ENCODE measurements at regions of chr12 and their contacts with region 1.

Region 1: DNA sequence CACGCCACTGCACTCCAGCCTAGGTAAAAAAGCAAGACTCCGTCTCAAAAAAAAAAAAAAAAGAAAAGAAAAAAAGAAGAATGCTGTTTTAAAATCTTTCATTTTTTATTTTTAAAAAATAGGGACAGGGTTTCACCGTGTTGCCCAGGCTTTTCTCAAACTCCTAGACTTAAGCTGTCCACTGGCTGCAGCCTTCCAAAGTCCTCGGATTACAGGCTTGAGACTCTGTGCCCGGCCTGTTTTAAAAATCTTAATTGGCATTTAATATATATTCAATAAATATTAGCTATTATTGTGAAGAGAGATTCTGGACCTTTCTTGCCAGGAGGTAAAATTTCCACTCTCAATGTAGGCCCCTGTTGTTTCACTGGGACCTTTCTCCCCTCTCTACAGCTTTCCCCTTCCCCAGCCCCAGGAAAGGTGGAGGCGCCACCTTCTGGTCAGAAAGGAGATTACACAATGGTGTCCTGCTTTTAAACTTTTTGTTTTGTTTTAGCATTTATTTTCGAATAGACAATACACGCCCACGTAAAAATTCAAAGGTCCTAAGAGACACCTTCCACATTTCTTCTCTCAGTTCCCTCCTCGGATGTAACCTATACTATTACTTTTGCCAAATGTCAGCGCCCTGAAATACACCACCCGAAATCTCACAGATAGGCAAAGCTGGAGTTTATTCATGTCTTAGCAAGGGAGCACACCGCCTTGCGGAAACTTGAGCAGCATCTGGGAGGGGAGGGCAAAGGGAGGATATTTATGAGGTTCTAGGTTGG is 23.8 kb upstream of the PHC1 start:
- DNase-seq: peak; percentile 67
- ATAC-seq: peak; percentile 55
- H3K4me3 Mint-ChIP-seq: peak overlapping the region; percentile 73
- H3K27ac Mint-ChIP-seq: no peak overlapping the region
- H3K4me1 Mint-ChIP-seq: peaks cover 5% of the 10 kb centered on the region
- H3K27me3 Mint-ChIP-seq: peaks cover 19% of the 10 kb centered on the region

Region 2: GRCh38 chr12:8590842-8591550 is 299.5 kb before region 1 on chr12:
- CTCF ChIA-PET with region 1: no interaction called
- DNase-seq: no peak
- ATAC-seq: no peak
- H3K4me3 Mint-ChIP-seq: no peak overlapping the region
- H3K27ac Mint-ChIP-seq: no peak overlapping the region
- H3K4me1 Mint-ChIP-seq: peaks cover 8% of the 10 kb centered on the region
- H3K27me3 Mint-ChIP-seq: peaks cover 7% of the 10 kb centered on the region

Region 3: GRCh38 chr12:8662593-8662992 is 227.9 kb before region 1 on chr12 and contains the start of gene MFAP5:
- CTCF ChIA-PET with region 1: interaction called, 18 read pairs
- DNase-seq: no peak
- ATAC-seq: no peak
- H3K4me3 Mint-ChIP-seq: no peak within 1 kb of the TSS
- H3K27ac Mint-ChIP-seq: no peak within 1 kb of the TSS
- H3K4me1 Mint-ChIP-seq: no peaks in the 10 kb centered on the region
- H3K27me3 Mint-ChIP-seq: peaks cover 12% of the 10 kb centered on the region
- total RNA-seq, gene MFAP5: not detected

Region 4: GRCh38 chr12:8681041-8681902 is 209.2 kb before region 1 on chr12:
- CTCF ChIA-PET with region 1: interaction called, 19 read pairs
- DNase-seq: no peak
- ATAC-seq: no peak
- H3K4me3 Mint-ChIP-seq: no peak overlapping the region
- H3K27ac Mint-ChIP-seq: no peak overlapping the region
- H3K4me1 Mint-ChIP-seq: no peaks in the 10 kb centered on the region
- H3K27me3 Mint-ChIP-seq: peaks cover 16% of the 10 kb centered on the region

Region 5: DNA sequence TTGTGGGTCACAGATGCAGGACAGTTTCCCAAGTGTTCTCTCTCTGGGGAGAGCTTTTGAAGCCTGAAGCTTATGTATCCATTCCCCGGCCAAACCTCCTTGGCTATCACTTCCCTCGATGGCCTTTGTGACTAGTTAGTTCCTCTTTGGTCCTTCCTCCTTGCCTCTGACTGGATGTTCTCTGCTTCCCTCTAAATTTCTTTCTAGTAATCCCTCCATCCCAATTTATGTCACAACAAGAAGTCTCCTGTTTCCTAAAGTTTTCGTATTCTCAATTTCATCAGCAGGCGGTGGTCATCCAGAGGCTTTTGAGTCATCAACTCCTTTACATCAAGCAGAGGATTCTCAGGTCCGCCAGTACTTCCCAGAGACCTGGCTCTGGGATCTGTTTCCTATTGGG is 40.6 kb before region 1 on chr12:
- CTCF ChIA-PET with region 1: no interaction called
- DNase-seq: no peak
- ATAC-seq: no peak
- H3K4me3 Mint-ChIP-seq: no peak overlapping the region
- H3K27ac Mint-ChIP-seq: no peak overlapping the region
- H3K4me1 Mint-ChIP-seq: no peaks in the 10 kb centered on the region
- H3K27me3 Mint-ChIP-seq: no peaks in the 10 kb centered on the region

Region 6: GRCh38 chr12:8860165-8860961 is 30.1 kb before region 1 on chr12:
- CTCF ChIA-PET with region 1: interaction called, 11 read pairs
- DNase-seq: no peak
- ATAC-seq: no peak
- H3K4me3 Mint-ChIP-seq: no peak overlapping the region
- H3K27ac Mint-ChIP-seq: no peak overlapping the region
- H3K4me1 Mint-ChIP-seq: no peaks in the 10 kb centered on the region
- H3K27me3 Mint-ChIP-seq: peaks cover 12% of the 10 kb centered on the region

Region 7: GRCh38 chr12:8914716-8915526 is 24.4 kb after region 1 on chr12:
- CTCF ChIA-PET with region 1: interaction called, 13 read pairs
- DNase-seq: peak; percentile 72
- ATAC-seq: peak; percentile 92
- H3K4me3 Mint-ChIP-seq: no peak overlapping the region
- H3K27ac Mint-ChIP-seq: no peak overlapping the region
- H3K4me1 Mint-ChIP-seq: peaks cover 8% of the 10 kb centered on the region
- H3K27me3 Mint-ChIP-seq: peaks cover 18% of the 10 kb centered on the region

Region 8: DNA sequence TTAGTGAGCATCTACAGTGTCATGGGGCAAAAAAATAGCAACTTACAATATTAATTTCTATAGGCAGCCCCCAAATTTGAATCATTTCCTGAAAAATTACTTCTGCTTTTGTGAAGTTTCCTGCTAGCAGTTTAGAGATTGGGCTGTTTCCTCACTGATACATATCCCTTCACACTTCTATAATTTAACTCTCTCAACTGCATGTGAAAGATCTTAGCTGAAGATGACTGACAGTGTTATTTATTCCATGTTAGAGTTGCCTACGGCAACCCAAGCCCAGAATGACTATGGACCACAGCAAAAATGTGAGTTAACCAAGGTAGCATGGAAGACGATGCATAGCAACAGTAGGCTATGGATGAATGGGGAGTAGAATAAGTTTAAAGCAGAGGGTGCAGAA is 98.9 kb after region 1 on chr12 and contains the start of gene KLRG1:
- CTCF ChIA-PET with region 1: no interaction called
- DNase-seq: no peak
- ATAC-seq: peak; percentile 62
- H3K4me3 Mint-ChIP-seq: peak within 1 kb of the TSS; percentile 49
- H3K27ac Mint-ChIP-seq: peak within 1 kb of the TSS; percentile 69
- H3K4me1 Mint-ChIP-seq: peaks cover 27% of the 10 kb centered on the region
- H3K27me3 Mint-ChIP-seq: no peaks in the 10 kb centered on the region
- total RNA-seq, gene KLRG1: 4.3 to 5.6 TPM

Region 9: GRCh38 chr12:9049520-9050133 is 159.1 kb after region 1 on chr12:
- CTCF ChIA-PET with region 1: interaction called, 28 read pairs
- DNase-seq: no peak
- ATAC-seq: peak; percentile 76
- H3K4me3 Mint-ChIP-seq: no peak overlapping the region
- H3K27ac Mint-ChIP-seq: no peak overlapping the region
- H3K4me1 Mint-ChIP-seq: peaks cover 7% of the 10 kb centered on the region
- H3K27me3 Mint-ChIP-seq: peaks cover 4% of the 10 kb centered on the region

Region 10: DNA sequence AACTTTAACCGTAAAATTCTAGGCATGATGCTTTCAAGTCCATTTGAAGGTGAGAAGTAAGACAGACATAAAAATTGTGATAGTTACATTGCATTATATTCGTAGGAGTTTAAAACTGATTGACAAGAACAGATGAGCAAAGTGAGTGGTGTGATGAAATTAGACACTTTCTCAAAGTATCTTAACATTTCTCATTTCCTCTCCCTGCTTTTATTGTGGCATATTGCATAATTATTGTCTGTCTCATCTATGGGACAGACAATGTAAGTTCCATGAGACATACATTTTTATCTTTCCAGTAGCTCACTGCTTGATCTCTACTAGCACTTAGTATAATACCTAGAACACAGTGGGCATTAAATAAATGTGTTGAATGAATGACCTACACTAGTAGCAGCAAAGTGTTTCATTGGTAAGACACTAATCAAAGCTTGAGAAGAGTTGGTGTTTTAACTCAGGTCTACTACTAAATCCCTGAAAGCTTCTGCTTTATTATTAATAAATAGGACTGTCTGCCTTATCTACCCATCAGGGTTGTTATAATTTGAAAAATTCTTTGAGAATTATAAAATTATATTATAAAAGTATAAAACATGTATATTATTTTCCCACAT is 206.2 kb after region 1 on chr12:
- CTCF ChIA-PET with region 1: no interaction called
- DNase-seq: no peak
- ATAC-seq: no peak
- H3K4me3 Mint-ChIP-seq: no peak overlapping the region
- H3K27ac Mint-ChIP-seq: no peak overlapping the region
- H3K4me1 Mint-ChIP-seq: no peaks in the 10 kb centered on the region
- H3K27me3 Mint-ChIP-seq: no peaks in the 10 kb centered on the region